Naive thymus-derived CD4-positive, alpha-beta T cell (primary cell): ENCODE measurements at regions of chrX and their contacts with region 1.

Region 1: GRCh38 chrX:21374163-21374993 is at the start of gene CNKSR2:
- DNase-seq: peak; percentile 40 to 79 (median 70)
- ATAC-seq: peak; percentile 83
- H3K4me3 ChIP-seq: peak within 1 kb of the TSS; percentile 62
- H3K4me3 Mint-ChIP-seq: peak within 1 kb of the TSS; percentile 84 to 95 (median 92)
- H3K27ac ChIP-seq: peak within 1 kb of the TSS; percentile 70
- H3K27ac Mint-ChIP-seq: peak within 1 kb of the TSS; percentile 55 to 90 (median 82)
- H3K4me1 ChIP-seq: peaks cover 0 to 7% of the 10 kb centered on the region in 2 donors
- H3K4me1 Mint-ChIP-seq: peaks cover 6 to 39% (median 34%) of the 10 kb centered on the region in 7 donors
- H3K27me3 ChIP-seq: no peaks in the 10 kb centered on the region
- H3K27me3 Mint-ChIP-seq: peaks cover 0 to 14% (median 0%) of the 10 kb centered on the region in 5 donors
- total RNA-seq, gene CNKSR2: 6.3 to 25.3 (median 16.9) TPM

Region 2: GRCh38 chrX:20141281-20142220 is 1232.8 kb before region 1 on chrX and contains the start of gene EIF1AX:
- CTCF ChIA-PET with region 1: no interaction called
- POLR2A ChIA-PET with region 1: no interaction called
- intact Hi-C with region 1: loop called in 1 of 2 experiments (anchors 5 kb)
- DNase-seq: peak; percentile 82 to 100 (median 98)
- ATAC-seq: peak; percentile 99
- H3K4me3 ChIP-seq: peak within 1 kb of the TSS; percentile 84
- H3K4me3 Mint-ChIP-seq: peak within 1 kb of the TSS; percentile 80 to 96 (median 88)
- H3K27ac ChIP-seq: peak within 1 kb of the TSS; percentile 93
- H3K27ac Mint-ChIP-seq: peak within 1 kb of the TSS; percentile 68 to 97 (median 89)
- H3K4me1 ChIP-seq: peaks cover 8 to 13% of the 10 kb centered on the region in 2 donors
- H3K4me1 Mint-ChIP-seq: peaks cover 4 to 42% (median 27%) of the 10 kb centered on the region in 7 donors
- H3K27me3 ChIP-seq: no peaks in the 10 kb centered on the region
- H3K27me3 Mint-ChIP-seq: no peaks in the 10 kb centered on the region
- total RNA-seq, gene EIF1AX: 40.2 to 67.5 (median 51.6) TPM

Region 3: GRCh38 chrX:21132686-21133393 is 241.5 kb before region 1 on chrX:
- CTCF ChIA-PET with region 1: no interaction called
- POLR2A ChIA-PET with region 1: no interaction called
- intact Hi-C with region 1: no loop called
- DNase-seq: no peak
- ATAC-seq: no peak
- H3K4me3 ChIP-seq: no peak overlapping the region
- H3K4me3 Mint-ChIP-seq: no peak overlapping the region
- H3K27ac ChIP-seq: no peak overlapping the region
- H3K27ac Mint-ChIP-seq: no peak overlapping the region
- H3K4me1 ChIP-seq: no peaks in the 10 kb centered on the region
- H3K4me1 Mint-ChIP-seq: no peaks in the 10 kb centered on the region
- H3K27me3 ChIP-seq: no peaks in the 10 kb centered on the region
- H3K27me3 Mint-ChIP-seq: no peaks in the 10 kb centered on the region

Region 4: DNA sequence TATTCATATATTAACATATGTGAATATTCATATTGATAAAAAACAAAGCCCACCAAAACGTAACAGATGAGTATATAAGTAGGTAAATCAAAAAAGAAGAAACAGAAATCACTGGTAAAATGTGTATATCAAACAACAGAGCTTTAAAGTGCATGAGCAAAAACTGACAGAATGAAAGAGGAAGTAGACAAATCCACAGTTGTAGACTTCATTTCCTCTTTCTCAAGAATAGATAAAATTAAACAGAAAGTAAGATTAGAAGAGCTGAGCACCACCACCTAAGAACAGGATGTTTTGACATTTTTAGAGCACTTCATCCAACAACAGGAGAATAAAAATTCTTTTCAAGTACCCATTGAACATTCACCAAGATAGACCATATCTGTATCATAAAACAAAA is 64.4 kb after region 1 on chrX:
- CTCF ChIA-PET with region 1: no interaction called
- POLR2A ChIA-PET with region 1: interaction called, 7 read pairs
- intact Hi-C with region 1: loop called (anchors 1 to 2 kb)
- DNase-seq: peak in 7 of 9 donors; percentile 7 to 58 (median 47)
- ATAC-seq: peak; percentile 86
- H3K4me3 ChIP-seq: no peak overlapping the region
- H3K4me3 Mint-ChIP-seq: peak overlapping the region; percentile 20 to 89 (median 82)
- H3K27ac ChIP-seq: peak overlapping the region; percentile 50
- H3K27ac Mint-ChIP-seq: peak overlapping the region; percentile 86 to 96 (median 92)
- H3K4me1 ChIP-seq: peaks cover 2 to 14% of the 10 kb centered on the region in 2 donors
- H3K4me1 Mint-ChIP-seq: peaks cover 4 to 61% (median 43%) of the 10 kb centered on the region in 7 donors
- H3K27me3 ChIP-seq: no peaks in the 10 kb centered on the region
- H3K27me3 Mint-ChIP-seq: no peaks in the 10 kb centered on the region

Region 5: GRCh38 chrX:21590012-21590776 is 215.8 kb after region 1 on chrX:
- CTCF ChIA-PET with region 1: no interaction called
- POLR2A ChIA-PET with region 1: no interaction called
- intact Hi-C with region 1: loop called in 1 of 2 experiments (anchors 5 kb)
- DNase-seq: peak in 7 of 9 donors; percentile 8 to 64 (median 42)
- ATAC-seq: peak; percentile 87
- H3K4me3 ChIP-seq: no peak overlapping the region
- H3K4me3 Mint-ChIP-seq: peak overlapping the region in 9 of 10 donors; percentile 30 to 75 (median 53)
- H3K27ac ChIP-seq: peak overlapping the region; percentile 10
- H3K27ac Mint-ChIP-seq: peak overlapping the region in 8 of 9 donors; percentile 32 to 94 (median 88)
- H3K4me1 ChIP-seq: peaks cover 0 to 12% of the 10 kb centered on the region in 2 donors
- H3K4me1 Mint-ChIP-seq: peaks cover 5 to 31% (median 18%) of the 10 kb centered on the region in 7 donors
- H3K27me3 ChIP-seq: no peaks in the 10 kb centered on the region
- H3K27me3 Mint-ChIP-seq: no peaks in the 10 kb centered on the region

Region 6: GRCh38 chrX:21725496-21725895 is 351.1 kb after region 1 on chrX:
- CTCF ChIA-PET with region 1: no interaction called
- POLR2A ChIA-PET with region 1: no interaction called
- intact Hi-C with region 1: loop called in 1 of 2 experiments (anchors 5 kb)
- DNase-seq: peak in 6 of 9 donors; percentile 4 to 43 (median 14)
- ATAC-seq: no peak
- H3K4me3 ChIP-seq: no peak overlapping the region
- H3K4me3 Mint-ChIP-seq: no peak overlapping the region
- H3K27ac ChIP-seq: no peak overlapping the region
- H3K27ac Mint-ChIP-seq: no peak overlapping the region
- H3K4me1 ChIP-seq: no peaks in the 10 kb centered on the region
- H3K4me1 Mint-ChIP-seq: no peaks in the 10 kb centered on the region
- H3K27me3 ChIP-seq: no peaks in the 10 kb centered on the region
- H3K27me3 Mint-ChIP-seq: peaks cover 0 to 16% (median 0%) of the 10 kb centered on the region in 5 donors

Region 7: GRCh38 chrX:21839334-21840192 is 465.2 kb after region 1 on chrX and contains the start of gene MBTPS2:
- CTCF ChIA-PET with region 1: no interaction called
- POLR2A ChIA-PET with region 1: no interaction called
- intact Hi-C with region 1: loop called in 1 of 2 experiments (anchors 5 kb)
- DNase-seq: peak; percentile 51 to 82 (median 77)
- ATAC-seq: peak; percentile 97
- H3K4me3 ChIP-seq: peak within 1 kb of the TSS; percentile 83
- H3K4me3 Mint-ChIP-seq: peak within 1 kb of the TSS; percentile 82 to 96 (median 88)
- H3K27ac ChIP-seq: peak within 1 kb of the TSS; percentile 72
- H3K27ac Mint-ChIP-seq: peak within 1 kb of the TSS; percentile 83 to 95 (median 89)
- H3K4me1 ChIP-seq: peaks cover 0 to 8% of the 10 kb centered on the region in 2 donors
- H3K4me1 Mint-ChIP-seq: peaks cover 0 to 19% (median 7%) of the 10 kb centered on the region in 7 donors
- H3K27me3 ChIP-seq: no peaks in the 10 kb centered on the region
- H3K27me3 Mint-ChIP-seq: peaks cover 0 to 3% (median 0%) of the 10 kb centered on the region in 5 donors
- total RNA-seq, gene MBTPS2: 5.2 to 9.9 (median 7.2) TPM